ENCODE measurements at regions of chr21 and their contacts with region 1.

Region 1: DNA sequence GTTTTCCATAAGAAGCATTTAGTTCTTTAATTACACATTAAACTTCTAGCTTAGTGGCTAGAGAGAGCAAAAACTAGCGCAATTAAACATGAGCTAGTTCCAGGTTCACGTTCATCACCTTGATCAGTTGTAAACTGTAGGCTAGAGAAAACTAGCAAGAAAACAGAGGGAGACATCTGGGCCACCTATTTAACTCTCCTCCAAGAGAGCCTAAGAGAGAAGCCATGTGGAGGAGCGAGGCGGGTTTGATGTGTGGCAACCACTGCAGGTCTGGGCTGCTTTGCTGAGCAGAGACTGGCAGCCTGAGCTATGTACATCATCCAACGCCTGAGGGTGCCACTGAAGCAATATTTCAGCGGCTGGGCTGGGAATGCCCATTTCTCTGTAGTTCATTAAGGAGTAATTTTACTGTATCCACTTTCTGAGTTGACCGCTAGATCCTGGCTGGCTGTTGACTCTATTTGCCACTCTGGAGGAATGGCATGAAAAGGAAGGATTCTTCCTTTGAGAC is 252.9 kb downstream of the DYRK1A start:
- DNase-seq: no peak
- H3K4me3 Mint-ChIP-seq: no peak overlapping the region
- H3K27ac Mint-ChIP-seq: no peak overlapping the region
- H3K4me1 Mint-ChIP-seq: no peaks in the 10 kb centered on the region
- H3K27me3 Mint-ChIP-seq: peaks cover 8% of the 10 kb centered on the region

Region 2: DNA sequence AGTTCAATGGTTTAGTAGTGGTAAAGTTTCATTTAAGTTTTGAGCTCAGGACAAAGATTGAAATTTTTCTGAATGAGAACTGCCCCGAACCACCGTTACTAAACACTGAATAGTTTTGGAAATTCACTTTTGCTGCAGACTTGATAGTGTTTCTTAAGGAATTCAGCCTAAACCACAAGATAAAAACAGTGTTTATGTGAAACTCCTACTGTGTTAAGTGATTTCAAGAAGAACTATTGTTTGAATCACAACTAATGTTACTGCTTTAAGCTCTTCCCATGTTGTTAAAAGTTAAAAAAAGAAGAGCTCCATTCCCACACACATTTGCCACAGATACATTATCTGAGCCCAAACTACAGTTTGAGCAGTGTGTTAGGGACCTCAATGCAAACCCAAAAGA is 93.7 kb before region 1 on chr21:
- intact Hi-C with region 1: no loop called
- DNase-seq: no peak
- H3K4me3 Mint-ChIP-seq: no peak overlapping the region
- H3K27ac Mint-ChIP-seq: no peak overlapping the region
- H3K4me1 Mint-ChIP-seq: no peaks in the 10 kb centered on the region
- H3K27me3 Mint-ChIP-seq: peaks cover 5% of the 10 kb centered on the region

Region 3: GRCh38 chr21:37711836-37712568 is 92.5 kb after region 1 on chr21:
- intact Hi-C with region 1: no loop called
- DNase-seq: peak; percentile 25
- H3K4me3 Mint-ChIP-seq: no peak overlapping the region
- H3K27ac Mint-ChIP-seq: no peak overlapping the region
- H3K4me1 Mint-ChIP-seq: no peaks in the 10 kb centered on the region
- H3K27me3 Mint-ChIP-seq: peaks cover 7% of the 10 kb centered on the region

Region 4: GRCh38 chr21:39125752-39126485 is 1506.4 kb after region 1 on chr21:
- intact Hi-C with region 1: loop called (anchors 10 kb)
- DNase-seq: no peak
- H3K4me3 Mint-ChIP-seq: no peak overlapping the region
- H3K27ac Mint-ChIP-seq: no peak overlapping the region
- H3K4me1 Mint-ChIP-seq: peaks cover 6% of the 10 kb centered on the region
- H3K27me3 Mint-ChIP-seq: peaks cover 15% of the 10 kb centered on the region

Measured in activated T-helper 1 cell treated with anti-CD3 and anti-CD28 coated beads, Interleukin-12 subunit alpha, Interleukin-12 subunit beta, Interleukin-2, Interleukin-4 antibody, amounts not matched to agents 30 ng/mL and 10 ng/mL and 1 ng/mL, durations not matched to agents 14 hours and 24 hours and 36 hours (primary cell).